Activated CD4-positive, alpha-beta T cell treated with anti-CD3 and anti-CD28 coated beads for 36 hours (primary cell): ENCODE measurements at regions of chr16 and their contacts with region 1.

Region 1: GRCh38 chr16:2513405-2514322 is at the start of gene ATP6V0C:
- DNase-seq: peak; percentile 95
- ATAC-seq: peak; percentile 90
- H3K4me3 Mint-ChIP-seq: peak within 1 kb of the TSS; percentile 93
- H3K27ac Mint-ChIP-seq: peak within 1 kb of the TSS; percentile 95
- H3K4me1 Mint-ChIP-seq: peaks cover 44% of the 10 kb centered on the region
- H3K27me3 Mint-ChIP-seq: no peaks in the 10 kb centered on the region
- total RNA-seq, gene ATP6V0C: 91.7 to 130 TPM

Region 2: GRCh38 chr16:2205104-2205966 is 308.3 kb before region 1 on chr16 and contains the start of gene MLST8:
- CTCF ChIA-PET with region 1: interaction called, 4 read pairs
- POLR2A ChIA-PET with region 1: no interaction called
- intact Hi-C with region 1: loop called in 1 of 2 experiments (anchors 1 kb)
- DNase-seq: peak; percentile 92
- ATAC-seq: peak; percentile 84
- H3K4me3 Mint-ChIP-seq: peak within 1 kb of the TSS; percentile 83
- H3K27ac Mint-ChIP-seq: peak within 1 kb of the TSS; percentile 84
- H3K4me1 Mint-ChIP-seq: peaks cover 16% of the 10 kb centered on the region
- H3K27me3 Mint-ChIP-seq: no peaks in the 10 kb centered on the region
- total RNA-seq, gene MLST8: 61.3 to 76.1 TPM

Region 3: GRCh38 chr16:2459647-2460390 is 53.8 kb before region 1 on chr16 and contains the start of gene TEDC2:
- CTCF ChIA-PET with region 1: no interaction called
- POLR2A ChIA-PET with region 1: no interaction called
- intact Hi-C with region 1: loop called in 1 of 2 experiments (anchors 1 kb)
- DNase-seq: peak; percentile 99
- ATAC-seq: peak; percentile 98
- H3K4me3 Mint-ChIP-seq: peak within 1 kb of the TSS; percentile 73
- H3K27ac Mint-ChIP-seq: peak within 1 kb of the TSS; percentile 67
- H3K4me1 Mint-ChIP-seq: peaks cover 6% of the 10 kb centered on the region
- H3K27me3 Mint-ChIP-seq: no peaks in the 10 kb centered on the region
- total RNA-seq, gene TEDC2: 21.0 to 23.1 TPM

Region 4: GRCh38 chr16:2474877-2475412 is 38.7 kb before region 1 on chr16 and contains the start of gene TBC1D24:
- CTCF ChIA-PET with region 1: no interaction called
- POLR2A ChIA-PET with region 1: no interaction called
- intact Hi-C with region 1: loop called (anchors 1 to 5 kb)
- DNase-seq: peak; percentile 89
- ATAC-seq: peak; percentile 71
- H3K4me3 Mint-ChIP-seq: peak within 1 kb of the TSS; percentile 71
- H3K27ac Mint-ChIP-seq: peak within 1 kb of the TSS; percentile 69
- H3K4me1 Mint-ChIP-seq: peaks cover 6% of the 10 kb centered on the region
- H3K27me3 Mint-ChIP-seq: peaks cover 16% of the 10 kb centered on the region
- total RNA-seq, gene TBC1D24: 10.4 to 12.7 TPM

Region 5: DNA sequence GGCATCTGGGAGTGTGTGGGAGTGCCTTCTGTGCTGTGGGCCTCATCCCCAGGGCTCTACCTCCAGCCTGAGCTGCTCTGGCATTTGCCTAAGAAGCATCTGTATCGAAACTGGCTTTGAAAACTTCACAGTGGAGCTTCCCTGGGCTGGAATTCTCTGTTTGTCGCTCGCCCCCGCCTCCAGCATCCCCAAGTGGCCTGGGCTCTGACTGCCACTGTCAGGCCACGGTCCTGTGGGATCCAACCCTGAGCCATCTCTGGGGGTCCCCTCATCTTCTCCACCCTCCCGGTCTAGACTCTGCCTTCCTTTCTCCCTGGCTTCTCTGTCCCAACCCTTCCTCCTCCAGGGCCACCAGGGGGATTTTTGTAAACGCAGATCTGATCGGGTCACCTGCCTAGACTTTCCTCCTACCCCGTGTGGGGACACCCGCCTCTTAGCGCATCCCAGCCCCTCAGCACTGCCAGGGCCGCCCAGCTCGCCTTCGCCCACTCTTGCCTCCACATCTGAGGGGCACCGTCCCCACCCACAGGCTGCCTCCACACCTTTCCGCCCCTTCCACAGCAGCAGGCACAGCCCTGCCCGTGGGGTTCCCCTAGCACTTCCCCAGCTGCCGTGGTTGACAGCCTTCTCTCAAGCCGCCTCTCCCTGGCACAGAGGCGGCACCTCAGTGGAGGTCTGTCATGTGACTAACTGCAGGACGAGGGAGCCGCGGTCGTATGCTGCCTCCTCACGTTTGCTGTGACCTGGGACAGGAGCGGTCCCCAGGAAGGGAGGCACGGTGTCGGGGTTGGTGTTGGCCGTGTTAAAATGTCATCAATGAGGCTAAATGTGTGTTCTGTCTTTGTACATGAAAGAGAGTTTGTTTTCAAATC is 26.8 kb before region 1 on chr16:
- CTCF ChIA-PET with region 1: no interaction called
- POLR2A ChIA-PET with region 1: no interaction called
- intact Hi-C with region 1: no loop called
- DNase-seq: peak; percentile 90
- ATAC-seq: peak; percentile 99
- H3K4me3 Mint-ChIP-seq: peak overlapping the region; percentile 51
- H3K27ac Mint-ChIP-seq: peak overlapping the region; percentile 70
- H3K4me1 Mint-ChIP-seq: peaks cover 14% of the 10 kb centered on the region
- H3K27me3 Mint-ChIP-seq: no peaks in the 10 kb centered on the region

Region 6: GRCh38 chr16:2531767-2532493 is 18.3 kb after region 1 on chr16:
- CTCF ChIA-PET with region 1: interaction called, 3 read pairs
- POLR2A ChIA-PET with region 1: no interaction called
- intact Hi-C with region 1: loop called (anchors 1 to 2 kb)
- DNase-seq: peak; percentile 99
- ATAC-seq: peak; percentile 94
- H3K4me3 Mint-ChIP-seq: peak overlapping the region; percentile 82
- H3K27ac Mint-ChIP-seq: peak overlapping the region; percentile 97
- H3K4me1 Mint-ChIP-seq: peaks cover 17% of the 10 kb centered on the region
- H3K27me3 Mint-ChIP-seq: no peaks in the 10 kb centered on the region